ENCODE measurements at regions of chr3 and their contacts with region 1.

Region 1: GRCh38 chr3:150303776-150304175 is 104.3 kb upstream of the TSC22D2 start:
- DNase-seq: no peak
- H3K4me3 ChIP-seq: no peak overlapping the region
- H3K27ac ChIP-seq: no peak overlapping the region
- H3K4me1 ChIP-seq: no peaks in the 10 kb centered on the region
- H3K27me3 ChIP-seq: no peaks in the 10 kb centered on the region
- CTCF ChIP-seq: peak; percentile 53 to 74 (median 73)
- EP300 ChIP-seq: no peak
- POLR2A ChIP-seq: no peak
- RAD21 ChIP-seq: peak; percentile 59 to 72

Region 2: DNA sequence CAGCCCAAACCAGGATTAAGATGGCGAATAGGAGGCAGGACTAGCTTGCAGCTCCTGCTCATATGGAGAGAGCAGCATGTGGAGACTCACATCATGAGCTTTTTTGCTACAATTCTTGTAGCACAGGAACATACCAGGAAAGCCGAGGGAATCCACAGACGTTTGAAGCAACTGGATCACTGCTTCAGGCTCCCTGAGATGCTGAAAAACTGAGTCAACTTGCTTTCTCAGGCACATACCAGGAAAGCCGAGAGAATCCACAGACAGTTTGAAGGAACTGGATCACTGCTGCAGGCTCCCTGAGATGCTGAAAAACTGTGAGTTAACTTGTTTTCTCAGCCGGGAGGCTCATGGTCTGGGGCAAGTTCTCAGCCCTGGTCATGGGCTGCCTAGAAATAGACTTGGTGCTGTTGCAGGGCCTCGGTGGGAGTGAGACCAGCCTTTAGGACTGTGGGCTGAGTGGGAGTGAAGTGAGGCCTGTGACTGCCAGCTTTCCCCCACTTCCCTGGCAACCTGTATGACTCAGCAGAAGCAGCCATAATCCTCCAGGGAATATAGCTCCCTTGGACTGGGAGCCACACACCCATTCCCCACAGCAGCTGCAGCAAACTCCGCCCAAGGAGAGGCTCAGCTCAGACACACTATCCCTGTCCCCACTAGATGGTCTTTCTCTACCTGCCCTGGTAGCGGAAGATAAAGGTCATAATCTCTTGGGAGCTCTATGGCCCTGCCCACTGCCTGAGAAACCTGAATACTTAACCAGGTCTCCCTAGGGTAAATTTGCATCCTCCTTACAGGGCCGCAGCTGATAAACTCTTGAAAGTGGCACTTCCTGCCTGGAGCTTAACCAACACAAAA is 281.2 kb before region 1 on chr3:
- CTCF ChIA-PET with region 1: no interaction called
- POLR2A ChIA-PET with region 1: no interaction called
- DNase-seq: no peak
- H3K4me3 ChIP-seq: no peak overlapping the region
- H3K27ac ChIP-seq: no peak overlapping the region
- H3K4me1 ChIP-seq: peaks cover 0 to 8% (median 4%) of the 10 kb centered on the region in 4 experiments; a peak in 5 of 7 replicates
- H3K27me3 ChIP-seq: no peaks in the 10 kb centered on the region
- CTCF ChIP-seq: no peak
- EP300 ChIP-seq: no peak
- POLR2A ChIP-seq: no peak
- RAD21 ChIP-seq: no peak

Region 3: GRCh38 chr3:150146991-150147761 is 156.6 kb before region 1 on chr3:
- CTCF ChIA-PET with region 1: no interaction called
- POLR2A ChIA-PET with region 1: no interaction called
- DNase-seq: no peak
- H3K4me3 ChIP-seq: no peak overlapping the region
- H3K27ac ChIP-seq: no peak overlapping the region
- H3K4me1 ChIP-seq: no peaks in the 10 kb centered on the region
- H3K27me3 ChIP-seq: no peaks in the 10 kb centered on the region
- CTCF ChIP-seq: no peak
- EP300 ChIP-seq: no peak
- POLR2A ChIP-seq: no peak
- RAD21 ChIP-seq: no peak

Region 4: DNA sequence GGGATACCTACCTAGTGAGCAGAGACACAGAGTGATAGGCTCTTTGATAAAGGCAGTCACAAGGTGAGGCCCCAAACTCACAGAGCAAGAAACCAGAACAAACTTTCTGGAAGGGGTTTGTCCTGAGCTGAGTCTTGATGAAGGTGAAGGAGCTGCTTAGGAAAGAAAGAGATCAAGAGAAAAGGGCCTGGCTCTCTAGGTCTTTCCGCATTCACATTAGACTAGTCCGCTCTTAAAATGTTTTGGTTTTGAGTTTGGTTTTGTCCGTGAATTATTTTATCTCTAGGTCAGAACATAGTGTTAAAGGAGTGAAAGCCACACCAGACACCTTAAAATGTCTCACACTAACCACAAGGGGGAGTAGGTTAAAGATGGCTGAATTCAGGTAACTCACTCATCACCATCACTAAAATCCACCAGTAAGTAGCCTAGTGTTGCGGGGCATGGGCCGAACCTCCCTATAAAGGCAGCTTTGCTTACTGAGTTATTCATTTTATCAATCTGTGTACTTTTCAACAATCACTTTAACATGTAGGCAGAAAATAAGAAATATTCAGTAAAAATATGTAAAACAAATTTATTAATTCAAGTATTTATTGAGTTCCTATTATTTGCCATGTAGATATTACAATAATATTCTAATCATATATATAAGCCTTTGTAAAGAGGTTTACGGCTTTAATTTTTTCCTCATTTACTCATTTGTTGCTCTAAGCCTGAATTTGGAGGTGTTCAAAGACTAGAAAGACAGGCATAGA is 17.2 kb before region 1 on chr3:
- CTCF ChIA-PET with region 1: interaction called, 11 read pairs
- POLR2A ChIA-PET with region 1: no interaction called
- DNase-seq: peak in 1 of 2 experiments; percentile 51
- H3K4me3 ChIP-seq: no peak overlapping the region
- H3K27ac ChIP-seq: no peak overlapping the region
- H3K4me1 ChIP-seq: no peaks in the 10 kb centered on the region
- H3K27me3 ChIP-seq: no peaks in the 10 kb centered on the region
- CTCF ChIP-seq: peak in 2 of 3 experiments; percentile 66 to 77; a peak in 3 of 4 replicates
- EP300 ChIP-seq: no peak
- POLR2A ChIP-seq: no peak
- RAD21 ChIP-seq: peak; percentile 75 to 77

Region 5: DNA sequence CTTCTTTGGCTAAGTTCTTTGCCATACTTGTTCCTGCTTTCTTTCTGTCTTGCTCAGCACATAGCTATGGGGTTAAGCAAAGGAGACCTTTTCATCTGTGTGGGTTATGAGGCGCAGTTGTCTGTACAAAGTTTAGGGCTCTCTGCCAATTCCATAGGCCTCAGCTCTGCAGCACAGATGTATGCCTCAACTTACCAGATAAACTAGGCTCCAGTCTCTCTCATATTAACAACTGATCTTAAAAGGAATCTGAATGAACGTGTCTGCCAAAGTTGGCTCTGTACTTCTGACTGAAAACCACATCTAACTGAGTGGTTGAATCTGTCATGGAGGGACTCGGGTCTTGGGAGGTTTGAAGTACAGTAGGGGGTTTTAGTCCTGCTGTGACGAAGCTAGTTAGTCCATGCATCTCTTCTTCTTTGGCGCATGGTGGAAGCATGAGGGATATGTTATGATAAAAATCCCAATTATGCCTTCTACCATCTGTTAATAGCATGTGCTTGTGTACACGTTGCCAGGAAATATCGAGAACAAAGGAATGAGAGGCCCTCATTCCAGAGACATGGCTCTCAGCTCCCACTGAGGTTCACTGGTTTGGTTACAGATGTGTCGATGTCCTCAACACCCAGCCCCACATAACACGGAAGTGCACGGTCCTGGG is 10.2 kb before region 1 on chr3:
- CTCF ChIA-PET with region 1: interaction called, 26 read pairs
- POLR2A ChIA-PET with region 1: interaction called, 3 read pairs
- DNase-seq: no peak
- H3K4me3 ChIP-seq: no peak overlapping the region
- H3K27ac ChIP-seq: no peak overlapping the region
- H3K4me1 ChIP-seq: peaks cover 0 to 5% (median 3%) of the 10 kb centered on the region in 4 experiments; a peak in 3 of 7 replicates
- H3K27me3 ChIP-seq: no peaks in the 10 kb centered on the region
- CTCF ChIP-seq: no peak
- EP300 ChIP-seq: no peak
- POLR2A ChIP-seq: no peak
- RAD21 ChIP-seq: no peak

Region 6: DNA sequence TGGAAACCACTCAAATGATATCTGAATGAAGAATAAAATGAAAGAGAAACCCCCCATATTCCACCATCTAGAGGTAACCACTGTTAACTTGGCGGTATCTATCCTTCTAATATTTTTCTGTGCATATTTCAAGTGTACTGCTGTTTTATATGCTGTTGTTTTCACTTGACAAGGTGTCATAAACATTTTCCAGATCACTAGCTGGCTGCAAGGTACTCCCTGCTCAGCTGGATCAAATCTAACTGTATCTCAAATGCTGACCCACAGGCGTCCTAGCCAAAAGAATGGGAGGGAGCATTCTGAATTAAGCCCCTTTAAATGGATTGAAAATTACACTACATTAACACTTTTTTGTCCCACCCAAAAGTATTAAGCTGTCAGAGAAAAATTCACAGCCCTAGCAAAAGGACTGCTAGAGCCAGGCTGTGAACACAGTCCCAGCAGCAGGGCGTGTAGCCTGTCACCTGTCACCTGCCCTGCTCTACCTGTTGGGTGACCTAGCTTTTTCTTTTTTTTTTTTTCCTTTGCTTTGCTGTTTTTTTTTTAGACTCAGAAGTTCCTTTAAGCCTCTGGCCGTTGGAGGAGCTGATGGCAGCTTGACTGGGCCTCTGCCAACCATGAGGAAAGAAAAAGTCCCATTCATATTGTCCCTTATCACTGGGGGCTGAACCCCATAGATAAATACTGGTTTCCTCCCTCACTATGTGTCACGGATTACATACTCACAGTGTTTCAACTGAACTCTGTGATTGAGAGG is 10.7 kb after region 1 on chr3:
- CTCF ChIA-PET with region 1: interaction called, 24 read pairs
- POLR2A ChIA-PET with region 1: no interaction called
- DNase-seq: no peak
- H3K4me3 ChIP-seq: no peak overlapping the region
- H3K27ac ChIP-seq: no peak overlapping the region
- H3K4me1 ChIP-seq: no peaks in the 10 kb centered on the region
- H3K27me3 ChIP-seq: no peaks in the 10 kb centered on the region
- CTCF ChIP-seq: no peak
- EP300 ChIP-seq: no peak
- POLR2A ChIP-seq: no peak
- RAD21 ChIP-seq: no peak